Panc1 (cell line): ENCODE measurements at regions of chr19 and their contacts with region 1.

Region 1: GRCh38 chr19:58091251-58091995 is 6.6 kb downstream of the ZSCAN18 start:
- DNase-seq: no peak
- ATAC-seq: 0 out of 2 replicates have a peak, but pooled peaks have one; percentile 27
- H3K4me3 ChIP-seq: no peak overlapping the region
- H3K27ac ChIP-seq: no peak overlapping the region
- H3K4me1 ChIP-seq: no peaks in the 10 kb centered on the region
- H3K27me3 ChIP-seq: no peaks in the 10 kb centered on the region
- CTCF ChIP-seq: no peak

Region 2: GRCh38 chr19:58128041-58128685 is 36.7 kb after region 1 on chr19:
- CTCF ChIA-PET with region 1: no interaction called
- POLR2A ChIA-PET with region 1: interaction called, 16 read pairs
- in situ Hi-C with region 1: no loop called
- intact Hi-C with region 1: no loop called
- DNase-seq: no peak
- ATAC-seq: no peak
- H3K4me3 ChIP-seq: no peak overlapping the region
- H3K27ac ChIP-seq: no peak overlapping the region
- H3K4me1 ChIP-seq: no peaks in the 10 kb centered on the region
- H3K27me3 ChIP-seq: no peaks in the 10 kb centered on the region
- CTCF ChIP-seq: no peak

Region 3: DNA sequence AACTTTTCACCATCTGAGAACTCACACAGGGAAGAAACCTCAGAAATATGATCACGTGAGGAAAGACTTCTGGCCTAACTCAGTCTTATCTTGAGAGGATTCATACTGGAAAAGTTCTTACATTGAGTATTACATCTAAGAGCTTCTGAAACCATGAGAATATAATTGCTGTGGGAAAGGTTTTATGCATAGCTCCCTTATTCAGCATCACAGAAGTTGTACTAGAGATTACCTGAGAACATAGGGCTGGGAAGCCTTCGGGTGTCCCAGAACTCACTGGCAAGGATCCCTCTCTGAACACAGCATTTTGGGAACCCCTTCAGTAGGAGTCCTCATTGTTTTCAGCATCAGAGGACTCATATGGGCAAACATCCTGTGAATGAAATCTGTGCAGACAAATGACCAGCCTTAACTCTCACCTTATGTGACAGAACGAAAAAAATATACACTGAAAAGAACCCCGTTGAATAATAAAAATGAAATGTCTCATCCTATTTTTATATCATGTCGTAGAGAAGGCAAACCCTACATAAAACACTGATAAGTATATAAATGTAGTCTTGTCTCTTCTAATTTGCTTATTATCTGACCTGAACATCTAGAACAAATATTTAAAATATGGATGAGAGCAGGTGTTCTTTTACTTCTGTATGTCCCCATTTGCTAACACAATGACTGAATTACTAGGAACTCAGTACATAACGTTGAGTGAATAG is 105.6 kb after region 1 on chr19:
- CTCF ChIA-PET with region 1: no interaction called
- POLR2A ChIA-PET with region 1: no interaction called
- in situ Hi-C with region 1: no loop called
- intact Hi-C with region 1: no loop called
- DNase-seq: no peak
- ATAC-seq: no peak
- H3K4me3 ChIP-seq: no peak overlapping the region
- H3K27ac ChIP-seq: no peak overlapping the region
- H3K4me1 ChIP-seq: no peaks in the 10 kb centered on the region
- H3K27me3 ChIP-seq: no peaks in the 10 kb centered on the region
- CTCF ChIP-seq: no peak